Endothelial cell of umbilical vein (primary cell): ENCODE measurements at regions of chr11 and their contacts with region 1.

Region 1: DNA sequence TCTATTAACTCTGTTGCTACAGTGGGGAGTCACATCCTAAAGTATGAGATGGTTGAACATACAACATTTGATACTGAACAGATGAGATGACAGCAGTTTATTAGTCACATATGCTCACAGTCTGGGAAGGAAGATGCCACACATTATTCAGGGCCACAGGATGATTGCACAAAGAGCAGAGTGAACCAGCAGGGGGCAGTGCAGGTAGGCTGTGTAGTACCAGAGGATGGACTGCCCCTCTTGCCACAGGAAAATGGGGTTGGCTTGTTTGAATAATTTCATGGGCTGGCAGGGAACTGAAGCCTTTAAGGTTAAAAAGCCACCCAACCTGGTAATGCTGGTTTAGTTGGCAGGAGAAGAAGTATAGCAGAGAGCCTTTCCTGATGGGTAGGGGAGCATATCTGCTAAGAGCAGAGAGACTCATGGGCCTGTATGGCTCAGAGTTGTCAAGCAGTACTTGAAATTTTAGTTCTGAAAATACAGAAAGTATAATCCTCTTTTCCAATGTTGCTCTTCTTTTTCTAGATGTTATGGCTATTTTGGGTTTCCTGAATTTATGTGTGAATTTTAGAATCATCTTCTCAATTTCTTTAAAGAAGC is 180.4 kb upstream of the B3GAT1 start:
- DNase-seq: peak; percentile 2
- H3K4me3 ChIP-seq: no peak overlapping the region
- H3K27ac ChIP-seq: no peak overlapping the region
- H3K4me1 ChIP-seq: no peaks in the 10 kb centered on the region
- H3K27me3 ChIP-seq: no peaks in the 10 kb centered on the region
- CTCF ChIP-seq: peak; percentile 31 to 46
- POLR2A ChIP-seq: no peak

Region 2: DNA sequence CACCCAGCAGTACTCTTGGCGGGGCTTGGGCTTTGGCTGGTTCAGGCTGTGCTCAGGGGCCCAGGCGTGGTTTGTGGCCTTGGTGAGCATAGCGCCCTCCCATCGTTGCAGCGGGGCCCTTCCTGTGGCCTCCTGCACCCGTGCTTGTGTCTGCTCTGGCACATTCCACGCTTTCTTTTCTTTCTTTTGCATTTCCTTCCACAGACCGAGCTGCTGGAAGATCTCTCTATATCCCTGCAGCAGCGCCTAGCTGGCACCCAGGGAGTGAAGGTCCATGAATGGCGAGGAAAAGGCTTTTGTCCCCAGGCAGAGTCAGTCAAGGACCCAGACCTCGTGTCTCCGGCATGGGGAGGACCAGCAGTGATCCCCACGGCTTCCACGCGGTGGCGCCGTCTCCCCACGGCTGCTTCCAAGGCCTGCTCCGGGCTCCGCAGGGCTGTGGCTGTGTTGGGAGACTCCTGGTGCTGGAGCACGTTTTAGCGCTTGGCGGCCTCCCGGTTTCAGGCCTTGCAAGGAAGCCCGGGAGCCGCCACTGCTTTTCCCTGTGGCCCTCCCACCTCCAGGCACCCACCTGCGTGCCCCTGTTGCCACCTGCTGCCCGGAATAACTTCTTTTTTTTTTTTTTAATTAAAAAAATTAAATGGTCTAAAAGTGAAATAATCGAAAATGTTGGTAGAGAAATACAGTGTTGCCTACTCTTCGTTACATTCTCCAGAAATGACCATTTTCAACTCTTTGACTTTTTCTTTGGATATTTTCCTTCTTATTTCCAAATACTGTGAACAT is 232.2 kb before region 1 on chr11:
- CTCF ChIA-PET with region 1: no interaction called
- POLR2A ChIA-PET with region 1: no interaction called
- dilution Hi-C with region 1: no loop called
- intact Hi-C with region 1: loop called (anchors 1 kb)
- DNase-seq: peak; percentile 66
- H3K4me3 ChIP-seq: no peak overlapping the region
- H3K27ac ChIP-seq: no peak overlapping the region
- H3K4me1 ChIP-seq: no peaks in the 10 kb centered on the region
- H3K27me3 ChIP-seq: no peaks in the 10 kb centered on the region
- CTCF ChIP-seq: peak; percentile 86 to 97
- POLR2A ChIP-seq: no peak

Region 3: DNA sequence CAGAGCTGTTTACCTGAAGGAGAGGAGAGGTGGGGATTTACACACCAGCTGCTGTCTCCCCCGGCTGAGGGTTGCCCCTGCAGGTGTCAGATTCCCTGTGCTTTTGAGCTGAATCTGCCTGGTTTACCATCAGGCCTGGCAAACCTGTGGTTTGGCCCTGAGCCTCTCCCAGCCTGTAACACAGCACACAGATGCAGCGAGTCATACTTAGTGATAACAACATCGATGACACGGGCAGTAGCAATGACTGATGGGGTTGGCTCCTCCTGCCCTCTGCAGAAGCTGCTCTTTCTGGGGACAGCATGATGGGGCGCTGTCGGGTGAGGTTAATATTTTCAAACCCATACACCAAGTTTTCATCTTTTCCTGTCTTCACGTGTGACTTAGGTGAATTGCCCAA is 199.6 kb after region 1 on chr11:
- CTCF ChIA-PET with region 1: no interaction called
- POLR2A ChIA-PET with region 1: no interaction called
- dilution Hi-C with region 1: no loop called
- intact Hi-C with region 1: loop called (anchors 5 kb)
- DNase-seq: no peak
- H3K4me3 ChIP-seq: no peak overlapping the region
- H3K27ac ChIP-seq: no peak overlapping the region
- H3K4me1 ChIP-seq: no peaks in the 10 kb centered on the region
- H3K27me3 ChIP-seq: no peaks in the 10 kb centered on the region
- CTCF ChIP-seq: no peak
- POLR2A ChIP-seq: no peak